ENCODE measurements at regions of chr1 and their contacts with region 1.

Region 1: GRCh38 chr1:19240673-19241538 is 10.4 kb downstream of the EMC1 start:
- DNase-seq: peak; percentile 92
- H3K4me3 Mint-ChIP-seq: no peak overlapping the region
- H3K27ac Mint-ChIP-seq: no peak overlapping the region
- H3K4me1 Mint-ChIP-seq: no peaks in the 10 kb centered on the region
- H3K27me3 Mint-ChIP-seq: no peaks in the 10 kb centered on the region

Region 2: GRCh38 chr1:18262726-18263125 is 978.2 kb before region 1 on chr1:
- intact Hi-C with region 1: no loop called
- DNase-seq: no peak
- H3K4me3 Mint-ChIP-seq: no peak overlapping the region
- H3K27ac Mint-ChIP-seq: no peak overlapping the region
- H3K4me1 Mint-ChIP-seq: no peaks in the 10 kb centered on the region
- H3K27me3 Mint-ChIP-seq: no peaks in the 10 kb centered on the region

Region 3: DNA sequence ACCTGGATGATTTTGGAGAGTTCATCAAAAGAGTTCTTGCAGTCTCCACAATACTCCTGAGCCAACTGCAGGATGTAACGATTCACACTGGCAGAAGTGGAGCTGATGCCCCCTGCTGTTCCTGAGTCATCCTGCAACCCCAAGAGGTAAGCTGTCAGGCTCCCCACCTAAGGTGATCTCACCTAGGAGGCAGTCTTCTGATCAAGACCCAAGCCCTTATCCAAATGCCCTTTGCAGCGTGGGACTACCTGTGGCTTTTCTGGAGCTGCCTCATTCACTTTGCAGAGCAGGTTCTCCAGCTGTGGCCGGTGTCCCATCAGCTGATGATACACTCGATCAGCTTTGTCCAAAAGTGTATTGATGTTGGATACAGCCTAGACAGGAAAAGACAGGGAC is 127.2 kb before region 1 on chr1:
- intact Hi-C with region 1: loop called (anchors 5 kb)
- DNase-seq: peak; percentile 84
- H3K4me3 Mint-ChIP-seq: no peak overlapping the region
- H3K27ac Mint-ChIP-seq: no peak overlapping the region
- H3K4me1 Mint-ChIP-seq: no peaks in the 10 kb centered on the region
- H3K27me3 Mint-ChIP-seq: no peaks in the 10 kb centered on the region

Region 4: DNA sequence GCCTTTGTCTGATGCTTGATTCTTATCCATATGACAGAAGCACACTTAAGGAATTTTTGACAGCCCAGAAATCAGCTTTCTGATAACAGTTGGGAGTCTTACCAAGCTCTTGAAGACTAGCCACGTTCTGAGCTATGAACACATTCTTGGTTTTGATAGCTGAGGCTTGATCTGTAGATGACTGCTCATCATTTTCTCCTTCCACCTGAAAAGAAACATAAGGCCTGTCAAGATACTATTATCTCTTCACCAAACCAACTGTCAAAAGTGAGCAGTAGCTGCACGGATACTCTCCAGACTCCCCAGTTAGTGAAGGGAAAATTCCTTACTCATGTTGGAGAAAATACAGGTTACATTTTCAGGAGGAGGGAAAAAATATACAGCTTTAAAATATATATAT is 43.1 kb before region 1 on chr1:
- intact Hi-C with region 1: no loop called
- DNase-seq: no peak
- H3K4me3 Mint-ChIP-seq: no peak overlapping the region
- H3K27ac Mint-ChIP-seq: no peak overlapping the region
- H3K4me1 Mint-ChIP-seq: peaks cover 11% of the 10 kb centered on the region
- H3K27me3 Mint-ChIP-seq: no peaks in the 10 kb centered on the region